Activated B cell treated with CpG ODN at 0.5 μM for 24 hours (primary cell): ENCODE measurements at regions of chr12 and their contacts with region 1.

Region 1: DNA sequence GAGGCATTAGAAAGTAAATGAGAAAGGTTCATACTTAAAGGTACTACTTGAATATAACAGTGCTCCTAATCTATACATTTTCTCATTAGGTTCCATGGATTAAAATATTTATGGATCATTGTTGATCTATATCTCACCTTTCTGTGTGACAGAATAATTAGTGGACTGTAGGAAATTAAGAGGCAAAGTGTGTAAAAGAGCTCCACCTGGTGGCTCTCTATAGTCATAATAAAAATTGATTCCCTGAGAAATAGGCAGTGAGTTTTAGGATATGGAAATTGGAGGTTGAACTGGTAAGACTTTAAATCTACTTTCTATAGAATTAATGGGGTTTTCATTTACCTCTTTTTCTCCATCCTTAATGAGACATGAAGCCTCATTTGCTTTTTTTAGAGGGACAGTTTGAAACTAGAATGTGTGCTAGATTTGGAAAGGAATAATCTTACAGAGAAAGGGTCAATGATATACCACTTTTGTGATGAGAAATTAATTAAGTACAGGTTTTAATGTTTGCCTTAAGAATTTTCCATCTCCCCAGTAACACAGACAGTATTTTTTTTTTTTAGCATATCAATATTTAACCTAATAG is 11.8 kb upstream of the DERA start:
- DNase-seq: no peak
- ATAC-seq: peak; percentile 57
- H3K4me3 Mint-ChIP-seq: no peak overlapping the region
- H3K27ac Mint-ChIP-seq: no peak overlapping the region
- H3K4me1 Mint-ChIP-seq: peaks cover 5% of the 10 kb centered on the region
- H3K27me3 Mint-ChIP-seq: no peaks in the 10 kb centered on the region
- CTCF ChIP-seq: no peak

Region 2: GRCh38 chr12:15590180-15590826 is 309.1 kb before region 1 on chr12:
- CTCF ChIA-PET with region 1: interaction called, 24 read pairs
- POLR2A ChIA-PET with region 1: no interaction called
- intact Hi-C with region 1: loop called (anchors 1 kb)
- DNase-seq: peak; percentile 22
- ATAC-seq: peak; percentile 98
- H3K4me3 Mint-ChIP-seq: peak overlapping the region; percentile 72
- H3K27ac Mint-ChIP-seq: peak overlapping the region; percentile 14
- H3K4me1 Mint-ChIP-seq: peaks cover 9% of the 10 kb centered on the region
- H3K27me3 Mint-ChIP-seq: no peaks in the 10 kb centered on the region
- CTCF ChIP-seq: peak; percentile 55

Region 3: GRCh38 chr12:15772405-15773018 is 126.9 kb before region 1 on chr12:
- CTCF ChIA-PET with region 1: interaction called, 4 read pairs
- POLR2A ChIA-PET with region 1: no interaction called
- intact Hi-C with region 1: loop called (anchors 1 kb)
- DNase-seq: no peak
- ATAC-seq: no peak
- H3K4me3 Mint-ChIP-seq: no peak overlapping the region
- H3K27ac Mint-ChIP-seq: no peak overlapping the region
- H3K4me1 Mint-ChIP-seq: no peaks in the 10 kb centered on the region
- H3K27me3 Mint-ChIP-seq: peaks cover 13% of the 10 kb centered on the region
- CTCF ChIP-seq: no peak

Region 4: DNA sequence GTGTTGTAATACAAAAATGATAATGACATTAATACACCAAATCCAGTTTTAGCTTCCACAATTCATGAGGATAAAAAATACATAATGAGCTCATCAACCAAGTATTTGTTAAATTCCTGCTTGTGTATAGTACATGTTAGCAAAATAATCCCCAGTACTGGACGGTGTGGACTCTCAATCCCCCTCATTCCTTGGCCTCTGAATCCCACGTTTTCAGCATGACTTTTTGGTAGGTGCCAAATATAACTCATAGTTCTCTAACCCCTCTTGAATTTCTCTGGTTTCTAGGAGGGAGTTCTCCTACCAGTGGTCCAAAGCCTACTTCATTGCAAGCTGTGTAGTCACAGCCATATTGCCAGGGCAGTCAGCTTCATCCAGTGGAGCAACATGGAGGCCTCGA is 68.8 kb before region 1 on chr12:
- CTCF ChIA-PET with region 1: no interaction called
- POLR2A ChIA-PET with region 1: no interaction called
- intact Hi-C with region 1: no loop called
- DNase-seq: no peak
- ATAC-seq: no peak
- H3K4me3 Mint-ChIP-seq: no peak overlapping the region
- H3K27ac Mint-ChIP-seq: no peak overlapping the region
- H3K4me1 Mint-ChIP-seq: no peaks in the 10 kb centered on the region
- H3K27me3 Mint-ChIP-seq: peaks cover 8% of the 10 kb centered on the region
- CTCF ChIP-seq: no peak

Region 5: DNA sequence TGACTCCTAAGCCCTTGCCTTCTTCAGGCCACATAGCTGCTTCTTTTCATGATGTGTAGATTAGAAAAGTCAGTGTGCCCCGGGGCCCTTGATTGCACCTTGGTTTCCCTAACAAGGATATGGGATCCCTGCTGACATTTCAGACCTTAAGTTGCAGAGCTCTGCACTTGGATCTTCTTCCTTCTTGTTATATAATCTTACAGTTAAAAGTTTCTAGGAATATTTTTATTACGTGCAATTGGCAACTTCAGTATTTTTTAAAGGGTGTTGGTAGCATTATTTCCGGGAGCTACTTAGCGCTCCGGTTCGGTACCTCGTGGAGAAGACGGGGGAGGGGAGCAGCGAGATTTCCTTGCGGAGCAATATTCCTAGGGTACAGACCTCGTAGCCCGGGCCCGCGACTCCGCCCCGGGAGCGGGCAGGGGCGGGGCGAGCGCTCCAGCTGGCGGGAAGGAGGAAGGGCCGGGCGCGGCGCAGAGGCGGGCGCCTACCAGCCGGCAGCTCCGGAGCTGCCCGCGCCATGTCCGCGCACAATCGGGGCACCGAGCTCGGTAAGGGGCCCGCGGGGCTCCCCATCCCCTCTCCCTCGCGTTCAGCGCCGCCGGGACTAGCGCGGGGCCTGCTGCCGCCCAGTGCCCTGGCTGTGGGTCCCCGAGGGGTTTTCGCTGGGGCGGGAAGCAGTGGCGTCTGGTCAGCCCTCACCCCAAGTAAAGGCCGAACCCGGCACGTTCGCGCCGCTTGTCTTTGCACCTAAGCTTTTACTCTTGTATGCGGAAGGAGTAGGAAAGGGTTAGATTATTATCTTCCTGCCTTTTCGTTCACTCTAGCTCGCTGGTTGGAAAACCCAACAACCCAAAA is 11.7 kb after region 1 on chr12 and contains the start of gene DERA:
- CTCF ChIA-PET with region 1: interaction called, 14 read pairs
- POLR2A ChIA-PET with region 1: interaction called, 3 read pairs
- intact Hi-C with region 1: loop called (anchors 2 kb)
- DNase-seq: peak; percentile 69
- ATAC-seq: peak; percentile 96
- H3K4me3 Mint-ChIP-seq: peak within 1 kb of the TSS; percentile 86
- H3K27ac Mint-ChIP-seq: peak within 1 kb of the TSS; percentile 83
- H3K4me1 Mint-ChIP-seq: peaks cover 20% of the 10 kb centered on the region
- H3K27me3 Mint-ChIP-seq: no peaks in the 10 kb centered on the region
- CTCF ChIP-seq: no peak
- total RNA-seq, gene DERA: 21.2 and 22.1 TPM in 2 replicates

Region 6: GRCh38 chr12:15966426-15966825 is 67.0 kb after region 1 on chr12:
- CTCF ChIA-PET with region 1: no interaction called
- POLR2A ChIA-PET with region 1: no interaction called
- intact Hi-C with region 1: no loop called
- DNase-seq: no peak
- ATAC-seq: no peak
- H3K4me3 Mint-ChIP-seq: no peak overlapping the region
- H3K27ac Mint-ChIP-seq: no peak overlapping the region
- H3K4me1 Mint-ChIP-seq: no peaks in the 10 kb centered on the region
- H3K27me3 Mint-ChIP-seq: no peaks in the 10 kb centered on the region
- CTCF ChIP-seq: no peak